ENCODE measurements at regions of chrX and their contacts with region 1.

Region 1: GRCh38 chrX:48475774-48476577 is at the start of gene FTSJ1:
- DNase-seq: peak; percentile 84 to 95 (median 92)
- H3K4me3 ChIP-seq: peak within 1 kb of the TSS; percentile 36 to 85 (median 75)
- H3K27ac ChIP-seq: peak within 1 kb of the TSS in 55 of 59 donors; percentile 36 to 91 (median 76)
- H3K27me3 ChIP-seq: peaks cover 0 to 27% (median 0%) of the 10 kb centered on the region in 45 donors
- CTCF ChIP-seq: peak in 19 of 56 donors; percentile 14 to 49 (median 25)
- total RNA-seq, gene FTSJ1: 18.1 to 39.2 (median 27.8) TPM

Region 2: GRCh38 chrX:47650164-47651042 is 825.6 kb before region 1 on chrX and contains the start of gene ELK1:
- intact Hi-C with region 1: loop called in 1 of 2 experiments (anchors 10 kb)
- DNase-seq: peak; percentile 89 to 98 (median 97)
- H3K4me3 ChIP-seq: peak within 1 kb of the TSS; percentile 33 to 79 (median 65)
- H3K27ac ChIP-seq: peak within 1 kb of the TSS in 54 of 59 donors; percentile 31 to 89 (median 76)
- H3K27me3 ChIP-seq: peaks cover 0 to 55% (median 4%) of the 10 kb centered on the region in 45 donors
- CTCF ChIP-seq: peak in 9 of 56 donors; percentile 4 to 34 (median 17)
- total RNA-seq, gene ELK1: 25.1 to 179 (median 92.3) TPM

Region 3: DNA sequence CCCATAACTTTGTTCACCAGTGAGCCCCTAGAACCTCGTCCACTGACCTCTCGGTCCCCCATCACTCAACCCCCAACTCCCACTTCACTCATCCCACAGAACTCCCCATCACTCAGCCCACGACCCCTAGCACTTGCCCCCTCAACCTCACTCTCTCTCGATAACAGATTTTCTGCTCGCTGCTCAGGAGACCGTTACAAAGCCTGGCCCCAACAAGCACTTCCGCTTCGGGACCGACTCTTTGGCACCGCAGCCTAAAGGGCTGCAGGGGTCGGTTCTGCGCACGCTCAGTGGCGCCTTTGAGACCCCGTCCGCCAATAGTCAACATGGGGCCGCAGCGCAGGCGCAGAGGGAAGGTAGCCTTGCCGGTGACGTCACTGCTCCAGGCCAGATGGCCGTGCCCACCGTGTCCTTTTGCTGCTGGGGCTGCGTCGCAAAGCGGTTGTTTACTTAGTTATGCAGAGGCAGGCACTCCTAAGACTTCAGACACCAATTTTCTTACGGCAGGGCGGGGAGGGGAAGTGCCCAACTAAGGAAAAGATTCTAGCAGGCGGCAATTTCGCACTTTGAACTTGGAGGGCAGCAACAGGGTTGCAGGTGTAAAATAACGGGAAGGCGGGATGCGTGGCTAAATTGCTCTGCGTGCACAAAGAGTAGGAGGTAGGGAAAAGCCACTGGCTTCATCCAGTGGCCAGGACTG is 472.1 kb before region 1 on chrX and contains the start of gene ZNF182:
- intact Hi-C with region 1: loop called in 1 of 2 experiments (anchors 10 kb)
- DNase-seq: peak; percentile 80 to 89 (median 86)
- H3K4me3 ChIP-seq: peak within 1 kb of the TSS; percentile 38 to 76 (median 60)
- H3K27ac ChIP-seq: peak within 1 kb of the TSS in 52 of 59 donors; percentile 29 to 88 (median 70)
- H3K27me3 ChIP-seq: peaks cover 0 to 4% (median 0%) of the 10 kb centered on the region in 45 donors
- CTCF ChIP-seq: peak in 3 of 56 donors; percentile 12 to 23 (median 23)
- total RNA-seq, gene ZNF182: 5.7 to 35.3 (median 8.4) TPM

Region 4: DNA sequence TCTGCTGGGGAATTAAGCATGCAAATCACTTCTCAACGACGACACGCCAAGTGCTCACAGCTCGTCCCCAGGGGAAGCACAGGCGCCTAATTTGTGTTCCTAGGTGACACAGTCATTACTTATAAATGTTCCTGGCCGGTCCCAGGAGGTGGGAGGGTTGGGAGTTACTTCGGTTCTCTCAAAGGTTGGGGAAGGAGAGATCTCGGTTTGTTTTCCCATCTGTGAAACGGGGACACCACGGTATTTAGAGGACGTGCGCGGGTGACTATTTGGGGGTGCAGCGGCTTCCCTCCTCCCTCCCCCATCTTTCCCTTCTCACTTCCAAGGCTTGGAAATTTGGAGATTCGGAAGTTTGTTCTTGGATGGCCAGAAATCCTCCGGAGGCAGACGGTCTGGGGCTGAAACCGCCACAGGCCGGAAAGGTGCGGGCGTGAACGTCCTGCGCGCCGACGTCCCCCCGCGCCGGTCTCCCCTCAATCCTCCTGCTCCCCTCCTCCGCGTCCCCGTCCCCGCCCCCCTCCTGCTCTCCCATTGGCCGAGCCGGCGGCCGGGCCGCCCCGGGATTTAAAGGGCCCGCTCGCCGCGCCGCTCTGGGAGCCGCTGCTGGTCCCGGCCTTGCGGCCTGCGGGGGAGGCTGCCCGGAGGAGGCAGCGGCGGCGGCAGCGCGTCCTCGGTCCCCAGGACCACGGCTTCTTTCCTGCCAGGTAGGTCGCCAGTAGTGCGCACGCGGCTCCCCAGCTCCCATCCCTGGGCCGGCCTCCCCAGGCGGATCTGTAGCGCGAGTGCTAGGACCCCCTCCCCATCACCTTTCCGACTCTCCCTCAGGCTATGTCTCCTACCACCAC is 32.6 kb after region 1 on chrX and contains the start of gene PORCN:
- intact Hi-C with region 1: loop called in 1 of 2 experiments (anchors 5 kb)
- DNase-seq: peak; percentile 57 to 86 (median 76)
- H3K4me3 ChIP-seq: peak within 1 kb of the TSS; percentile 42 to 84 (median 69)
- H3K27ac ChIP-seq: peak within 1 kb of the TSS in 46 of 59 donors; percentile 13 to 85 (median 67)
- H3K27me3 ChIP-seq: peaks cover 0 to 51% (median 4%) of the 10 kb centered on the region in 45 donors
- CTCF ChIP-seq: peak in 1 of 56 donors; percentile 11
- total RNA-seq, gene PORCN: 13.7 to 42.8 (median 26.2) TPM

Region 5: DNA sequence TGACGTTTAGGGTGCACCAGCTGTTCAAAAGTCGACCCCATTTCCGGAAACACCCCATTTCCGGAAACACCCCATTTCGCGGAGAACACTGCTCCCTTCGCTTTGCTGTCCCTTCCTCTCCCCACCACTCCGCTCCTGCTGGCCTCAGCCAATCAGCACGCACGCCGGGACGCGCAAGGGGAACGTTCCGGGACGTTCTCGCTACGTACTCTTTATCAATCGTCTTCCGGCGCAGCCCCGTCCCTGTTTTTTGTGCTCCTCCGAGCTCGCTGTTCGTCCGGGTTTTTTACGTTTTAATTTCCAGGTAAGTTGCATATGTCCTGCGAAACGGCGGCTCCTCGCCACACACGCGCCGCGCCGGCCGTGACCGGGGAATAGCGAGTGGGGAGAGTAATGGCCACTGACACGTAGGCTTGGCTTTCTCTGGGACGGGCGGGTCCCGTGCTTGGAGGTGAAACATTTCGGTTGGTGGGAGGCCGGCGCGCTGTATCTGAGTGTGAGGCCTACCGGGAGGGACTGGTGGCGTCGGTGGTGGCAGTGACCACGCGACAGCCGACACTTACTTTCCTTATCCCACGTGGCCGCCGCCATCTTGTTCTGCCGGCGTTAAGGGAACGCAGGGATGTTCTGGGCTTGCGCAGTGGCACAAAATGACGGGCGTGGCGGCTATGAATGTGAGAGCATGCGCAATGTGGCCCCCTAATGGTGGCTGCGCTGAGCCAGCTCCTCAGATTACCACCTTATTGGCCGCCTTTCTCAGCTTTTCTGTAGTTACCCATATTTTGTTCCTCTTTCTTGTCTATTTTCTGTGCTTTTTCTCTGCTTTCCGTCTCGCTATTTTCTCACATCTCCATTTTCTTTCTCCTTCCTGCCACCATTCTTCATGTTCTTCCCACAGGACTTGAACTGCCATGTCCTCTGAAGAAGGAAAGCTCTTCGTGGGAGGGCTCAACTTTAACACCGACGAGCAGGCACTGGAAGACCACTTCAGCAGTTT is 98.6 kb after region 1 on chrX and contains the start of gene RBM3:
- intact Hi-C with region 1: loop called (anchors 10 kb)
- DNase-seq: peak; percentile 82 to 94 (median 90)
- H3K4me3 ChIP-seq: peak within 1 kb of the TSS; percentile 43 to 88 (median 74)
- H3K27ac ChIP-seq: peak within 1 kb of the TSS; percentile 83 to 100 (median 98)
- H3K27me3 ChIP-seq: peaks cover 0 to 26% (median 0%) of the 10 kb centered on the region in 45 donors
- CTCF ChIP-seq: peak in 54 of 56 donors; percentile 15 to 65 (median 51)
- total RNA-seq, gene RBM3: 24.6 to 159 (median 56.4) TPM

Measured in dorsolateral prefrontal cortex (tissue), 120 donors.